HEK293T (cell line): ENCODE measurements at regions of chr13 and their contacts with region 1.

Region 1: GRCh38 chr13:94173312-94173854 is 306.1 kb downstream of the DCT start:
- DNase-seq: no peak

Region 2: DNA sequence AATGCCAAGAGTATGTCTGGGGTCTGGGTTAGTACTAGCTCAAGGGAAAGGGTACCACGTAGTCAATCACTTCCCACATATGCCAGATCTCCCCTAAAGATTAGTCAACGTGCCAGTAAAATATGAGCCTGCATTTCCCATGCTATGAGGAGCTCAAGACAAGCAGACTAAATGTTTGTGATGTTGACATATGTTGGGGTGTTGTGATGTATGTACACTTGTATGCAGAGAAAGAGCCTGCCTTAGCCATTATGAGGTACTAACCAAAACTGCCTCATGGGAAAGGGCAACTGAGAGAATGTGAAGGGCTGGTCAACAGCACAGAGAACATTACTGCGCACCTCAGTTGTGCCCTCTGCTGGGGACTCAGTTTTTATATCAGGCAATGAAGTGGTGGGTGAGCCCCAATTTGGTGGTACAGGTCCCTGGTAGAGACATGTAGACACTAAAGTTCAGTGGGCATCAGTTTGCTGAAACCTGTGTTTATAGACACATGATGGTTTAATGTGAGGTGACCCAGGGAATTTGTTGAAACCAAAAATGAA is 19.1 kb after region 1 on chr13:
- CTCF ChIA-PET with region 1: interaction called, 12 read pairs
- POLR2A ChIA-PET with region 1: no interaction called
- DNase-seq: peak; percentile 73

Region 3: DNA sequence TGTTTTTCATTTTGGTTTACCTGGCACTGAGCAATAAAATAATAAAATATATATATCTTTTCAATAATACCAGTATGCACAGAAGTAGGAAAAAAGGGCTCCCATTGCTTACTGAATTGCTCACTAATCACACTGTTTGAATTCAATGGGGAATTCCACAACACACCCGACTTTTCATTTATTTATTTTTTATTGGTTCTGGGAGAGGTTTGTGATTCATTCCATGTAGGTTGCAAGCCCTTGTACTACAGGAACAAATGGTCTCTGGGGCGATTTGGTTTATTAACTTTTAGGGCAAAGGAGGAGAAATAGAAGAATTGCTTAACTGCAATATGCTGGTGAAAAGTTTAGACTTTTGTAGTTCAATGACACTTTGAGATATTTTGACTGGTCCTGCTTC is 98.7 kb after region 1 on chr13:
- CTCF ChIA-PET with region 1: no interaction called
- POLR2A ChIA-PET with region 1: no interaction called
- DNase-seq: no peak